Naive thymus-derived CD4-positive, alpha-beta T cell (primary cell): ENCODE measurements at regions of chr1 and their contacts with region 1.

Region 1: GRCh38 chr1:46132529-46133180 is at the start of gene PIK3R3:
- DNase-seq: peak; percentile 40 to 88 (median 62)
- ATAC-seq: peak; percentile 93
- H3K4me3 ChIP-seq: peak within 1 kb of the TSS; percentile 88
- H3K4me3 Mint-ChIP-seq: peak within 1 kb of the TSS; percentile 89 to 99 (median 97)
- H3K27ac ChIP-seq: peak within 1 kb of the TSS; percentile 46
- H3K27ac Mint-ChIP-seq: peak within 1 kb of the TSS; percentile 23 to 98 (median 65)
- H3K4me1 ChIP-seq: peaks cover 3 to 7% of the 10 kb centered on the region in 2 donors
- H3K4me1 Mint-ChIP-seq: peaks cover 15 to 38% (median 27%) of the 10 kb centered on the region in 7 donors
- H3K27me3 ChIP-seq: peaks cover 4 to 10% of the 10 kb centered on the region in 2 donors
- H3K27me3 Mint-ChIP-seq: peaks cover 43 to 85% (median 66%) of the 10 kb centered on the region in 5 donors
- total RNA-seq, gene PIK3R3: 0.16 to 3.0 (median 0.56) TPM

Region 2: DNA sequence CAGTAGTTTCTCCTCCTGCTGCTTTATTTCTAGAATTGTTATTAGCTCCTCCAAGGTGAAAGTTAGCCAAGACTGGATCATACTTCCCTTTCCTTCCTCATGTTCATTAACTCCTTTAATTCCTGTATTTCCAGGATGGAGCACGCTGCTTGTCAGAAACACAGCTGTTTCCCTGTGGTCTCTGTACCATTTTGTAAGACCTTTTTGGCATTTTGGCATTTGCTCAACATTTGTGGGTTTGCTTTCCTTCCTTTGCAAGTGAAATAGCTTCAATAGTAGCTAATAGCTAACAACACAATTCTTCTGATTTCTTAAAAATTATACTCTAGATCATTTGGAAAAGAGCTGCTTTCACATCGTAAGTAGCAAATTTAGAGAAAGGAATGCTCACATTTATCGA is 850.3 kb before region 1 on chr1:
- CTCF ChIA-PET with region 1: no interaction called
- POLR2A ChIA-PET with region 1: no interaction called
- intact Hi-C with region 1: no loop called
- DNase-seq: no peak
- ATAC-seq: no peak
- H3K4me3 ChIP-seq: no peak overlapping the region
- H3K4me3 Mint-ChIP-seq: no peak overlapping the region
- H3K27ac ChIP-seq: no peak overlapping the region
- H3K27ac Mint-ChIP-seq: peak overlapping the region in 1 of 9 donors; percentile 35
- H3K4me1 ChIP-seq: no peaks in the 10 kb centered on the region
- H3K4me1 Mint-ChIP-seq: peaks cover 0 to 7% (median 0%) of the 10 kb centered on the region in 7 donors
- H3K27me3 ChIP-seq: no peaks in the 10 kb centered on the region
- H3K27me3 Mint-ChIP-seq: peaks cover 0 to 14% (median 4%) of the 10 kb centered on the region in 5 donors

Region 3: DNA sequence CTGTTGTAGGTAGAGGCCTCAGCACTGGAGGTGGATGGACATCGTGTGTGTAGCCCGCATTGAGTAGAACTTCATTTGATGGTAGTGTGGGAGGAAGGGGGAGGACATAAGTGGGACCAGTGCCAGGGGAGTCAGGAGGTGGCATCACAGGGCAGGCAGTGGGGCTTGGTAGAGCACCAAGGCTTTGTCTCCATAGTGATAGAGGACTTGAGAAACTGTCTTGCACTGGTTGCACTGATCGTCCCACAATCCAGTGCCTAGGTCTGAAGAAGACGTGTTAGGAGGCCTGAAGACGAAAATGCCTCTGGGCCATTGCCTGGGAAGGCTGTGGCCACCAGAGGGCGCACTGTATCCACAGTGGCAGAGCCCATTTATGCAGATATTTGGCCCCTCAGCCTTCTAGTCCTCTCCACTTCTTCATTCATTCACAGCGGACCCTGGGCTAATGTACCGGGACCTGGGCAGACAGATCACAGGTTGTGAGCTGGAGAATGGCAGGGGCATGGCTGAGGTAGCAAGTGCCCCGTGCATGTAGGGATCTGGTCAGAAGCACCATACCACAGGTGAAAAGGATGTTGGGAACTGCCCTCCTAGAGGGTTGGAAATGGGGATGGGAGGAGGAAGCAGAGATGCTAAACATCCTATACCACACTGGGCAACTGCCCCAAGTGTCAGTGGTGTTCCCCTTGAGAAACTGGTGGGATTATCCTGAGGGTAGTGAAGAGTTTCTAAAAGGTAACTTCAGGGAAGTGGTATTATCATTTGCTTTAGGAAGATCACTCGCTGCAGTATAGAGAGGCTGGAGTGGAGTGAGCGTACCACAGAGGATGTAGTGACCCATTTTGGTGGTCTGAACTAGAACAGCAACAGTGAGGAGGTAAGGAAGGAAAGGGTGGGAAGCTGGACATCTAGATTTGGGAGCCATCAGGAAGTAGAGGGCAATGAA is 95.5 kb before region 1 on chr1:
- CTCF ChIA-PET with region 1: no interaction called
- POLR2A ChIA-PET with region 1: no interaction called
- intact Hi-C with region 1: loop called in 1 of 2 experiments (anchors 2 kb)
- DNase-seq: peak; percentile 58 to 85 (median 78)
- ATAC-seq: peak; percentile 90
- H3K4me3 ChIP-seq: no peak overlapping the region
- H3K4me3 Mint-ChIP-seq: no peak overlapping the region
- H3K27ac ChIP-seq: no peak overlapping the region
- H3K27ac Mint-ChIP-seq: no peak overlapping the region
- H3K4me1 ChIP-seq: no peaks in the 10 kb centered on the region
- H3K4me1 Mint-ChIP-seq: no peaks in the 10 kb centered on the region
- H3K27me3 ChIP-seq: no peaks in the 10 kb centered on the region
- H3K27me3 Mint-ChIP-seq: no peaks in the 10 kb centered on the region

Region 4: DNA sequence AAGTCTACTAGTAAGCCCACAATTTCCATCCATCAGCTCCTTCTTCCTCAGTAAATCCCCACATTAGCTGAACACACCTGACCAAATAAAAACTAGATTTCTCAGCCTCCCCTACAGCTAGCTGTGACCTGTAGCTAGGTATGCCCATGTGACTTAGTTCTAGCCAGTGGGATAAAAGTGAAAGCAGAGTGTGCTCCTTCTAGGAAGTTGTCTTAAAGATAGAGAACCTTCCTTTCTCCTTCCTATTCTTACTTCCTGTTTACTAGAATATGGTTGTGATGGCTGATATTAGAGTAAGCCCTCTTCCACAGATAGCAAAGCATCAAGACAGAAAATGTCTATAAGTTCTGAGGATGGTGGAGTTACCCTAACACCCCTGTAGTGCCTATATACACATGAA is 67.2 kb before region 1 on chr1:
- CTCF ChIA-PET with region 1: no interaction called
- POLR2A ChIA-PET with region 1: no interaction called
- intact Hi-C with region 1: loop called (anchors 1 to 5 kb)
- DNase-seq: peak in 4 of 9 donors; percentile 7 to 29 (median 14)
- ATAC-seq: peak; percentile 77
- H3K4me3 ChIP-seq: peak overlapping the region; percentile 14
- H3K4me3 Mint-ChIP-seq: peak overlapping the region; percentile 11 to 81 (median 68)
- H3K27ac ChIP-seq: peak overlapping the region; percentile 11
- H3K27ac Mint-ChIP-seq: peak overlapping the region; percentile 60 to 86 (median 76)
- H3K4me1 ChIP-seq: peaks cover 9% of the 10 kb centered on the region in 2 donors
- H3K4me1 Mint-ChIP-seq: peaks cover 18 to 40% (median 27%) of the 10 kb centered on the region in 7 donors
- H3K27me3 ChIP-seq: no peaks in the 10 kb centered on the region
- H3K27me3 Mint-ChIP-seq: no peaks in the 10 kb centered on the region

Region 5: DNA sequence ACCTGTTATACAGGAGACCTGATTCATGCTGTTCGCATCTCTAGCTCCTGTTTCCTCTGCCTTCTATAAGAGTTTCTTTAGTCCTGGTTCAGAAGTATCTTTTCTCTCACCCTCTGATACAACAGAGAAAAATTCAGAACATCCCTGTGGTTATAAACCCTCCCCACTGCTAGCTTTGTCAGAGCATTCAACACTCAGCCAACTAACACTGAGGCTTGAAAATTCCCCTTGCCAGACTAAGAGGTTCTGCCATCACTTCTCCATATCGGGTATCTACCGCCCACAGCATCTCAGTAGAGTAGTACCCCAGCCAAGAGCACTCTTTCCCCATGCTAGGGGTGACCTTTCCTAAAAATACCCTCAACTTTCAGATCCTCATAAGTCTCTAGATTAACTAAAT is 19.4 kb after region 1 on chr1:
- CTCF ChIA-PET with region 1: no interaction called
- POLR2A ChIA-PET with region 1: no interaction called
- intact Hi-C with region 1: no loop called
- DNase-seq: no peak
- ATAC-seq: no peak
- H3K4me3 ChIP-seq: no peak overlapping the region
- H3K4me3 Mint-ChIP-seq: no peak overlapping the region
- H3K27ac ChIP-seq: no peak overlapping the region
- H3K27ac Mint-ChIP-seq: no peak overlapping the region
- H3K4me1 ChIP-seq: no peaks in the 10 kb centered on the region
- H3K4me1 Mint-ChIP-seq: no peaks in the 10 kb centered on the region
- H3K27me3 ChIP-seq: no peaks in the 10 kb centered on the region
- H3K27me3 Mint-ChIP-seq: peaks cover 0 to 3% (median 0%) of the 10 kb centered on the region in 5 donors

Region 6: GRCh38 chr1:46166521-46167462 is 34.1 kb after region 1 on chr1:
- CTCF ChIA-PET with region 1: no interaction called
- POLR2A ChIA-PET with region 1: interaction called, 3 read pairs
- intact Hi-C with region 1: loop called (anchors 2 kb)
- DNase-seq: peak; percentile 15 to 73 (median 65)
- ATAC-seq: peak; percentile 66
- H3K4me3 ChIP-seq: peak overlapping the region; percentile 83
- H3K4me3 Mint-ChIP-seq: peak overlapping the region; percentile 85 to 95 (median 91)
- H3K27ac ChIP-seq: peak overlapping the region; percentile 74
- H3K27ac Mint-ChIP-seq: peak overlapping the region; percentile 86 to 99 (median 96)
- H3K4me1 ChIP-seq: peaks cover 3 to 9% of the 10 kb centered on the region in 2 donors
- H3K4me1 Mint-ChIP-seq: peaks cover 10 to 26% (median 17%) of the 10 kb centered on the region in 7 donors
- H3K27me3 ChIP-seq: no peaks in the 10 kb centered on the region
- H3K27me3 Mint-ChIP-seq: peaks cover 0 to 30% (median 4%) of the 10 kb centered on the region in 5 donors

Region 7: DNA sequence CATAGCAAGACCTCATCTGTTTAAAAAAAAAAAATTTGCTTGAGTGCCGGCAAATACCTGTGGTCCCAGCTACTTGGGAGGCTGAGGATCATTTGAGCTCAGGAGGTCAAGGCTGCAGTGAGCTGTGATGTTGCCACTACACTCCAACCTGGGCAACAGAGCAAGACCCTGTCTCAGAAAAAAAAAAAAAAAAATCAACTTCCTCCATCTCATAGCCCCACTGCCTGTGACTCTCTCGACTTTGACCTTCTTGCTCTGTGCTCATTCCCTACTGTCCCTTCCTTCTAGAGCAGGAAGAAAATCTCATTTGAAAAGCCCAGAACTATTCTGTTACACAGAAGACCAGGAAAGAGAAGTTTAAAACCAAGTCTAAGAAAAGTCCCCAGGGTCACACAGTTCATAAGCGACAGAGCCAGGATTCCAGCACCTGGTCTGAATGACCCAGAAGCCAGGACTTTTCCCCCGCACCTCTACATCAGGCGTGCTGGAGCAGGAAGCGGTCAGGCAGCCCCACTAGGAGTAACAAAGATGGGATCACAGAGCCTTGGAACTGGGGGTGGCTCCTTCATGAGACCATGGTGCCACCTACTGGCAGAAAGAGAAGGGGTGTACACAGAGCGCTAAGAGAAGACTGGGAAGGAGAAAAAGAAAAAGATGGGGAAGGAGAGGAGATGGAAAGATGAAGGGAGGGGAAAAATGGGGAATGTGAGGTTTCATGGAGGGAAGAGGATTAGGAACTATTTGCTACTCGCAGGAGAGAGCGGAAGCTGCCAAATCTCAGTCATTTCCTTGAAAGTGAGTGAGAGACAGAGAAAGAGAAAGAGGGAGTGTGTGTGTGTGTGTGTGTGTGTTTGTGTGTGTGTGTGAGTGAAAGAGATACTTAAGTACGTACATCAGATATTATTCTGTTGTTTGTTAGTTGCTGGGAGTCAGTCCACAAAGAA is 46.8 kb after region 1 on chr1:
- CTCF ChIA-PET with region 1: no interaction called
- POLR2A ChIA-PET with region 1: no interaction called
- intact Hi-C with region 1: loop called in 1 of 2 experiments (anchors 2 kb)
- DNase-seq: peak; percentile 38 to 70 (median 58)
- ATAC-seq: peak; percentile 79
- H3K4me3 ChIP-seq: no peak overlapping the region
- H3K4me3 Mint-ChIP-seq: no peak overlapping the region
- H3K27ac ChIP-seq: no peak overlapping the region
- H3K27ac Mint-ChIP-seq: no peak overlapping the region
- H3K4me1 ChIP-seq: no peaks in the 10 kb centered on the region
- H3K4me1 Mint-ChIP-seq: peaks cover 0 to 8% (median 5%) of the 10 kb centered on the region in 7 donors
- H3K27me3 ChIP-seq: no peaks in the 10 kb centered on the region
- H3K27me3 Mint-ChIP-seq: no peaks in the 10 kb centered on the region

Region 8: GRCh38 chr1:46247436-46248121 is 114.9 kb after region 1 on chr1 and contains the start of gene RAD54L:
- CTCF ChIA-PET with region 1: no interaction called
- POLR2A ChIA-PET with region 1: no interaction called
- intact Hi-C with region 1: loop called in 1 of 2 experiments (anchors 1 kb)
- DNase-seq: peak; percentile 83 to 97 (median 95)
- ATAC-seq: peak; percentile 99
- H3K4me3 ChIP-seq: peak within 1 kb of the TSS; percentile 89
- H3K4me3 Mint-ChIP-seq: peak within 1 kb of the TSS; percentile 86 to 100 (median 94)
- H3K27ac ChIP-seq: peak within 1 kb of the TSS; percentile 66
- H3K27ac Mint-ChIP-seq: peak within 1 kb of the TSS; percentile 62 to 96 (median 78)
- H3K4me1 ChIP-seq: peaks cover 4 to 8% of the 10 kb centered on the region in 2 donors
- H3K4me1 Mint-ChIP-seq: peaks cover 0 to 41% (median 17%) of the 10 kb centered on the region in 7 donors
- H3K27me3 ChIP-seq: no peaks in the 10 kb centered on the region
- H3K27me3 Mint-ChIP-seq: no peaks in the 10 kb centered on the region
- total RNA-seq, gene RAD54L: 0.94 to 31.9 (median 2.1) TPM